Aorta (tissue), 5 donors: ENCODE measurements at regions of chr1 and their contacts with region 1.

Region 1: GRCh38 chr1:204506961-204507387 is 9.2 kb upstream of the MDM4 start:
- DNase-seq: peak in 1 of 2 donors; percentile 81
- ATAC-seq: peak; percentile 94
- H3K4me3 ChIP-seq: peak overlapping the region; percentile 67 to 86
- H3K27ac ChIP-seq: peak overlapping the region; percentile 30 to 57
- H3K4me1 ChIP-seq: no peaks in the 10 kb centered on the region
- H3K27me3 ChIP-seq: no peaks in the 10 kb centered on the region

Region 2: GRCh38 chr1:204411451-204412204 is 95.3 kb before region 1 on chr1 and contains the start of gene PPP1R15B:
- intact Hi-C with region 1: loop called in 1 of 2 experiments (anchors 5 kb)
- DNase-seq: peak; percentile 98 to 99
- ATAC-seq: peak; percentile 98
- H3K4me3 ChIP-seq: peak within 1 kb of the TSS; percentile 55 to 58
- H3K27ac ChIP-seq: peak within 1 kb of the TSS; percentile 70 to 97
- H3K4me1 ChIP-seq: peaks cover 0 to 4% of the 10 kb centered on the region in 2 donors
- H3K27me3 ChIP-seq: no peaks in the 10 kb centered on the region
- total RNA-seq, gene PPP1R15B: 39.3 to 59.9 TPM

Region 3: DNA sequence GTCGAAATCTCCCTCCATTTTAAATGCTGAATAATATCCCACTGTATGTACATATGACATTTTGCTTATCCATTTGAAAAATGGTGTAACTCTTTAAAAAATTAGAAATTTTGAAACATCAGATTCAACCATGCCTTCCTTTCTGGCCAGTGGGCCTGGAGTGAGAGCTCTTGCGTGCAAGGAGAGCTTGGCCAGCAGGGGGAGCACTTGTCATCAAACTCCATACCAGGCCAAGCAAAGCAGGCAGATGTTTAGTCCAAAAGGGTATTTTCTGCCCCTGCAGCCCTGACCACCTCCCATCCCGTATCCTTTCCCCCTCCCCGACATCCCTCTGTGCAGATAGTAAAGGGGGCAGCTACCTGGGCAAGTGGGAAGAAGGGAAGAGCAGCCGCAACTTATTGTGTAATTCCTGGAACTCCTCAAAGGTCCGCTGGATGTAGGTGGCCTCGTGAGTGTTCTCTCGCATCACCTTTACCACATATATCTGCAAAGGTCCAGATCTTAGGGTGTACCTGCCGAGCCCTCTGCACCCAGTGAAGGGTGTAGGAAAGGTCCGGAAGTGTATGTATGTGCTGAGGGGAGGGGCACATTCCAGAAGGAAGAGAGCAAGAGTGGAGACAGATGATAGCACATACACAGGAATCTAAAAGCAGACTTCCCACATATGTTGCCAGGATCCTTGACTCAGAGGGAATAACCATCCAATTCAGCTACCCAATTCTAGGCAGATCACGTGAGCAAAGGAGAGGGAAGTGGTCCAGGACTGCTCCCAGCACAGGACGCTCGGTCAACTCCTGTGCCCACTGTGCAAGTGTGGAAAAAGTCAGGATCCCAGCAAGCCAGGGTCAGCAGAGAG is 75.4 kb before region 1 on chr1:
- intact Hi-C with region 1: loop called (anchors 1 to 2 kb)
- DNase-seq: peak; percentile 89 to 93
- ATAC-seq: peak; percentile 86
- H3K4me3 ChIP-seq: no peak overlapping the region
- H3K27ac ChIP-seq: peak overlapping the region in 1 of 2 donors; percentile 9
- H3K4me1 ChIP-seq: no peaks in the 10 kb centered on the region
- H3K27me3 ChIP-seq: no peaks in the 10 kb centered on the region